ENCODE measurements at regions of chr9 and their contacts with region 1.

Region 1: GRCh38 chr9:133484671-133485360 is 5.9 kb upstream of the SLC2A6 start:
- DNase-seq: no peak
- H3K4me3 ChIP-seq: no peak overlapping the region
- H3K27ac ChIP-seq: no peak overlapping the region
- H3K4me1 ChIP-seq: no peaks in the 10 kb centered on the region
- H3K27me3 ChIP-seq: no peaks in the 10 kb centered on the region
- CTCF ChIP-seq: no peak
- POLR2A ChIP-seq: no peak

Region 2: GRCh38 chr9:133406480-133407307 is 78.1 kb before region 1 on chr9:
- intact Hi-C with region 1: loop called (anchors 5 kb)
- DNase-seq: peak; percentile 82
- H3K4me3 ChIP-seq: no peak overlapping the region
- H3K27ac ChIP-seq: no peak overlapping the region
- H3K4me1 ChIP-seq: no peaks in the 10 kb centered on the region
- H3K27me3 ChIP-seq: no peaks in the 10 kb centered on the region
- CTCF ChIP-seq: peak; percentile 71 to 87 (median 78)
- POLR2A ChIP-seq: no peak

Region 3: GRCh38 chr9:133417541-133418461 is 67.0 kb before region 1 on chr9 and contains the start of gene REXO4:
- intact Hi-C with region 1: no loop called
- DNase-seq: peak; percentile 80
- H3K4me3 ChIP-seq: peak within 1 kb of the TSS; percentile 83 to 85
- H3K27ac ChIP-seq: peak within 1 kb of the TSS; percentile 15 to 87
- H3K4me1 ChIP-seq: peaks cover 10% of the 10 kb centered on the region
- H3K27me3 ChIP-seq: no peaks in the 10 kb centered on the region
- CTCF ChIP-seq: no peak
- POLR2A ChIP-seq: no peak
- total RNA-seq, gene REXO4: 31.4 to 31.5 TPM

Region 4: DNA sequence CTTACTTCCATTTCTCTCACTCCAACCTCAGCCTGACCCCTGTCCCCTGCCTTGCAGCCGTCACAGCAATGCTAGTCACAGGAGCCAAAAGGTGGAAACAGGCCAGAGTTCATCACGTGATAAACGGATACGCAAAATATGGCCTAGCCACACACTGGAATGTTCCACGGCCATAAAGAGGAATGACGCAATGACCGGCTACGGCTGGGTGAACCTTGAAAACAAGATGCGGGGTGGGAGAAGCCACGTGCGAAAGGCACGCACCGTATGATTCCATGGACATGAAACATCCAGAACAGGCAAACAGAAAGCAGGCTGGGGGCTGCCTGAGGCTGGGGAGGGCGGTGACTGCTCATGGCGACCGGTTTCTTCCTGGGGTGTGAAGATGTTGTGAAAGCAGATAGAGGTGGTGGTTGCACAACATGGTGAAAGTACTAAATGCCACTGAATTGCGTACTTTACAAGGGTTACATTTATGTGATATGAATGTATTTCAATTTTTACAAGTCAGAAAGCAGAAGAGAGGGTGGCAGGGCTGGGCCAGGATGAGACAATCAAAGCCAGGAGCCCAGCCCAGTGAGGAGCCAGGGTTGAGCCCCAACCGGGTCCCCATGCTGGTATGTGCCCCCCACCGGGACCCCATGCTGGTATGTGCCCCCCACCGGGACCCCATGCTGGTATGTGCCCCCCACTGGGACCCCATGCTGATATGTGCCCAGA is 371.1 kb after region 1 on chr9:
- intact Hi-C with region 1: no loop called
- DNase-seq: no peak
- H3K4me3 ChIP-seq: no peak overlapping the region
- H3K27ac ChIP-seq: no peak overlapping the region
- H3K4me1 ChIP-seq: no peaks in the 10 kb centered on the region
- H3K27me3 ChIP-seq: no peaks in the 10 kb centered on the region
- CTCF ChIP-seq: no peak
- POLR2A ChIP-seq: no peak

Measured in testis (tissue), 5 donors.